K562 (cell line): ENCODE measurements at regions of chr2 and their contacts with region 1.

Region 1: DNA sequence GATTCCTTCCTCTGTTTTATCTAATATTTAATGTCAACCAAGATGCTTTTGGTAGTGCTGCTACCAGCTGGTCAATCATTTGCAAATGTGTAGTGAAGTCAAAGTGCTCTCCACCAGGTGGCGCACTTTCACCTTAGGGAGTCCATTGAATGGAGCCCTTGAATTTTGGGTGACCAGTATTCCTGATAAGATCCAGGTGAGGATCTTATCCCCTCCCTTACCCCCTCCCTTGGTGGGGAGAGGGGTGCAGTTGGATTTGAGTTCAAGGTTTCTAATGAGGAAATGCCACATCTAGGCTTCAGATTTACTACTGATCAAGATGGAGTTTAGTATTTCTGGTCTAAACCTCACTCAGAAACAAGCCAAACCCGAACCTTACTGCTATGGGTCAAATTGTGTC is 12.0 kb upstream of the E2F6 start:
- DNase-seq: peak; percentile 63 to 88 (median 69)
- ATAC-seq: peak; percentile 92
- H3K4me3 ChIP-seq: no peak overlapping the region
- H3K27ac ChIP-seq: no peak overlapping the region
- H3K4me1 ChIP-seq: 0 out of 5 replicates have a peak, but pooled peaks cover 0 to under 1% of the 10 kb centered on the region in 2 experiments
- H3K27me3 ChIP-seq: peaks cover 14 to 28% of the 10 kb centered on the region in 2 experiments
- CTCF ChIP-seq: peak; percentile 82 to 89 (median 88)
- EP300 ChIP-seq: no peak
- POLR2A ChIP-seq: no peak
- RAD21 ChIP-seq: peak; percentile 87 to 93

Region 2: GRCh38 chr2:11534744-11535484 is 56.9 kb after region 1 on chr2:
- CTCF ChIA-PET with region 1: no interaction called
- POLR2A ChIA-PET with region 1: no interaction called
- in situ Hi-C with region 1: no loop called
- intact Hi-C with region 1: loop called (anchors 2 kb)
- DNase-seq: peak in 3 of 4 experiments; percentile 26 to 44 (median 38)
- ATAC-seq: peak; percentile 75
- H3K4me3 ChIP-seq: no peak overlapping the region
- H3K27ac ChIP-seq: no peak overlapping the region
- H3K4me1 ChIP-seq: no peaks in the 10 kb centered on the region; a peak in 1 of 5 replicates
- H3K27me3 ChIP-seq: peaks cover 31 to 56% of the 10 kb centered on the region in 2 experiments
- CTCF ChIP-seq: peak; percentile 47 to 71 (median 49); a peak in 5 of 6 replicates
- EP300 ChIP-seq: no peak
- POLR2A ChIP-seq: no peak
- RAD21 ChIP-seq: peak; percentile 10 to 39; a peak in 2 of 4 replicates

Region 3: DNA sequence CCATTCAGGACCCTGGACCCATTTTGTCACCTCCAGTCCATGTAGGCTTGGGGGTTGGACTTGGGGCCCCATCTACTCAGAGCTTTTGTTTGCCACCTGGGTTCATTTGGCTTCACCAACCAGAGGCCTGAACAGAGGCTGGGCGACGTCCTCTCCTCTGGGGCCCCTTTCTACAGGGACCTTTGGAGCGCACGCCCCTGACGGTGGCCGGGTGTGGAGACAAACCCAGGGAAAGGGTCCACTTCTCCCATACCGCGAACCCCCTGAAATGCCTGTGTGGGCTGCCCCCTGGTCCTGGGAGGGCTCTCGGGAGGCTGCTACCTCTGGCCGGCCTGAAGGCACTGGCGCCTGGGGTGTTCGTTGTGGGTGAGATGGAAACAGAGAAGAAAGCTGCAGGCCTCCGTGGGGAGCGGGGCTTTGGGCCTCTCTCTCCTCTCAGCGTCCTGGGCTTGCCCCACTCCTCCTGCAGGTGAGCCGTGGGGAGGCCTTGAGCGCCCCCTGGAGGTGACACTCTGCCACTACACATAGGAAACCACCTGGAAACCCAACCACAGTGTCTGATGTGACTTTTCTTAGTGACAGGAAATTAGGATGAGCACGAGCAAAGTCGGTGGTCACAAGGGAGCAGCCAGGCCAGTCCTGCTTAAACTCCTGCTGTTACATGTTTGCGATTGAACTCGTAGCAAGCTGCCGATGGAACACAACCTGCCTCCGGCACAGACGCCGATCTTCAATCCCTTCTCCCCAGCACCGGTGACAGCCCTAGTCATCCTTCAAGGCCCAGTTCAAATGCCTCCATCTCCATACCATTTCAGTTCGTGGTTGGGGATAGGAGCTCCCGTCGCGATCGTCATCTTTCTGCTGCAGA is 204.0 kb after region 1 on chr2:
- CTCF ChIA-PET with region 1: interaction called, 4 read pairs
- POLR2A ChIA-PET with region 1: no interaction called
- in situ Hi-C with region 1: no loop called
- intact Hi-C with region 1: loop called (anchors 5 kb)
- DNase-seq: peak; percentile 71 to 91 (median 89)
- ATAC-seq: peak; percentile 93
- H3K4me3 ChIP-seq: no peak overlapping the region
- H3K27ac ChIP-seq: no peak overlapping the region
- H3K4me1 ChIP-seq: peaks cover 0 to 7% of the 10 kb centered on the region in 2 experiments; a peak in 2 of 5 replicates
- H3K27me3 ChIP-seq: peaks cover 26 to 80% of the 10 kb centered on the region in 2 experiments; a peak in 3 of 5 replicates
- CTCF ChIP-seq: peak; percentile 92 to 97 (median 92)
- EP300 ChIP-seq: no peak
- POLR2A ChIP-seq: no peak
- RAD21 ChIP-seq: peak; percentile 73 to 87